CD8-positive, alpha-beta memory T cell (primary cell): ENCODE measurements at regions of chr12 and their contacts with region 1.

Region 1: DNA sequence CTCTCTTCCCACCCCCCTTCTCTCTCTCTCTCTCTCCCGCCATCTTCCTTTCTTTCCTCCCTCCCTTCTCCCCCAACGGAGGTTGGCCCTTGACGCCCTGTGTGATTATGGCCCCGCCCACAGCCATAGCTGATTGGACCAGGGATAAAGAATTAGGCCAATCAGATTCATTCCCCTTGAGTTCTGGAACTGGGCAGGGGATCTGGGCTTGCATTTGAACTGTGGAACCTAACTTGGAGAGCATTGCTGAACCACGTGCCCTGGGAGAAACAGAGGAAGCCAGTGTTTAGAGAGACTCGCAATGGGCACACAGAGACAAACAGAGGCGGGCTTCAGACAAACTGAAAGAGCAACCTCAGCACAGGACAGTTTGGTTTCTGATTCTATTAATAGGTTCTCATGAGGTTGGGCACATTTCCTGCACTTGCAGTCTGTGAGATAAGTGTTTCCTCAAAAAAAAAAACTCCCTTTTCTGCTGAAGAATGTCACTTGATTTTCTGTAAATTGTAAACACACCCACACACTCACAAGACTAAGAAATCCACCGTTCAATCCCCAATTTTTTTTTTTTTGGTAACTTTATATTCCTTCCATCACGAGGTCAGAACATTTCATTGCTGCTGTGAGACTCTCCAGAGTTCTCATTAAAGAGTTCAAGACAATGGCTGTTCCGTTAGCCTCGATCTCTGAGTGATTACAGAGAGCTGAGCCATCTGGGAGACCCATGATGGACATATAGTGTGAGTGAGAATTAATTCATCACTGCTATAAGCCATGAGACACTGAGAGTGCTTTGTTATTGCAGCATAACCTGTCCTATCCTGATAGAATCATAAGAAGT is 3.5 kb upstream of the P2RX7 start:
- DNase-seq: peak; percentile 64 to 83 (median 78)
- H3K4me3 ChIP-seq: peak overlapping the region; percentile 57
- H3K4me3 Mint-ChIP-seq: peak overlapping the region; percentile 70 to 87 (median 82)
- H3K27ac ChIP-seq: peak overlapping the region; percentile 36
- H3K27ac Mint-ChIP-seq: peak overlapping the region; percentile 68 to 96 (median 88)
- H3K4me1 ChIP-seq: peaks cover 48% of the 10 kb centered on the region
- H3K4me1 Mint-ChIP-seq: peaks cover 70 to 93% (median 88%) of the 10 kb centered on the region in 3 donors
- H3K27me3 ChIP-seq: no peaks in the 10 kb centered on the region
- H3K27me3 Mint-ChIP-seq: no peaks in the 10 kb centered on the region

Region 2: DNA sequence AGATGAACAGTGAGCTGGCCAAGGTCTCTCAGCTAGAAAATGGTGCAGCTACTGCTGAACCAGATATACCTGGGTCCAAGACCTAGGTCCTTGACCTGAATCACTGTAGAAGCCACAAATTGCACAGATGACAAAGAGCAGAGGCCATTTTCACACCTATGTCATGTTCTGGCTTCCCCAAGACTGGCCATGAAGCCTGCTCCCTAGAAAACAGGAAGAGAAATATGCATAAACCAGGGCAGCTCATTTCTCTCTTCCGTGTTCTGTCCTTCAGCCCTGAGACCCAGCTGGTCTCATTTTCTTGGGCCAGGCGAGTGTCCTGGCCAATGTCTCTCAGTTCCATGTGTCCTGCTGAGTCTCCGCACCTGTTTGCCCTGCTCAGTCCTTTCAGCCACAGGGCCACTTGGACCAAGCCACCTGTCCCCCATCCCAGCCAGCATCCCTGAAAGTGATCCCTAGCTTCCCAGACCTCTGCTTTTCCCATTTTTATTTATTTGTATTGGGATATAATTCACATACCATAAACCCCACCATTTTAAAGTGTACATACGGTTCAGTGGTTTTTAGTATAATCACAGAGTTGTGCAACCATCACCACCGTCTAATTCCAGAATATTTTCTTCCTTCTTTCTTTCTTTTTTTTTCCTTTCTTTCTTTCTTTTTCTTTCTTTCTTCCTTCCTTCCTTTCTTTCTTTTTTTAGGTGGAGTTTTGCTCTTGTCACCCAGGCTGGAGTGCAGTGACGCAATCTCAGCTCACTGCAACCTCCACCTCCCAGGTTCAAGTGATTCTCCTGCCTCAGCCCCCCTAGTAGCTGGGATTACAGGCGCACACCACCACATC is 30.5 kb after region 1 on chr12:
- CTCF ChIA-PET with region 1: no interaction called
- POLR2A ChIA-PET with region 1: no interaction called
- DNase-seq: no peak
- H3K4me3 ChIP-seq: no peak overlapping the region
- H3K4me3 Mint-ChIP-seq: no peak overlapping the region
- H3K27ac ChIP-seq: no peak overlapping the region
- H3K27ac Mint-ChIP-seq: peak overlapping the region in 2 of 8 donors; percentile 47 to 52
- H3K4me1 ChIP-seq: no peaks in the 10 kb centered on the region
- H3K4me1 Mint-ChIP-seq: peaks cover 0 to 5% (median 0%) of the 10 kb centered on the region in 3 donors
- H3K27me3 ChIP-seq: no peaks in the 10 kb centered on the region
- H3K27me3 Mint-ChIP-seq: peaks cover 0 to 4% of the 10 kb centered on the region in 2 donors

Region 3: GRCh38 chr12:122190842-122191668 is 1061.9 kb after region 1 on chr12:
- CTCF ChIA-PET with region 1: no interaction called
- POLR2A ChIA-PET with region 1: interaction called, 10 read pairs
- DNase-seq: peak; percentile 52 to 77 (median 57)
- H3K4me3 ChIP-seq: no peak overlapping the region
- H3K4me3 Mint-ChIP-seq: no peak overlapping the region
- H3K27ac ChIP-seq: no peak overlapping the region
- H3K27ac Mint-ChIP-seq: no peak overlapping the region
- H3K4me1 ChIP-seq: no peaks in the 10 kb centered on the region
- H3K4me1 Mint-ChIP-seq: peaks cover 3 to 6% (median 6%) of the 10 kb centered on the region in 3 donors
- H3K27me3 ChIP-seq: no peaks in the 10 kb centered on the region
- H3K27me3 Mint-ChIP-seq: peaks cover 3 to 6% of the 10 kb centered on the region in 2 donors